ENCODE measurements at regions of chr2 and their contacts with region 1.

Region 1: GRCh38 chr2:178804791-178805190 is 2.4 kb downstream of the TTN start:
- DNase-seq: no peak
- ATAC-seq: no peak

Region 2: GRCh38 chr2:178859730-178860129 is 54.9 kb after region 1 on chr2:
- intact Hi-C with region 1: loop called (anchors 10 kb)
- DNase-seq: no peak
- ATAC-seq: peak; percentile 61